ENCODE measurements at regions of chrX and their contacts with region 1.

Region 1: DNA sequence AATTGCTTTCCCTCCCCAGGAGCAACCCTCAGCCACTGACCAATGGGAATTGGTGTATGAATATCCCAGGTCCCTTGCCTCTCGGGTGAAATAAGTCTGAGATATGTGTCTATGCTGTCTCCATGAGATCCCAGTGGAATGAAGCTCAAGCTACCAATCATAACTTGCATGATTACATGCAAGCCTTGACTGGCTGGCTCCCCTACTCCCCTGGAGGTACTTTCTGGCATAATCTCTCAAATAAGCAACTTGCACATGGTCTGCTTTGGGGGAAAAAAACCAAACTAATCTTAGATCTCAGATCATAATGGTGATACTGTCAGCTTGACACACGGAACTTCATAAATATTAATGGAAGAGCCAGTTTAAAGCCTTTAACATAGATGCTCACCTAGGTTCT is 14.0 kb upstream of the PDK3 start:
- DNase-seq: no peak
- ATAC-seq: no peak
- H3K4me3 Mint-ChIP-seq: no peak overlapping the region
- H3K27ac Mint-ChIP-seq: no peak overlapping the region
- H3K4me1 Mint-ChIP-seq: no peaks in the 10 kb centered on the region
- H3K27me3 Mint-ChIP-seq: no peaks in the 10 kb centered on the region
- CTCF ChIP-seq: no peak

Region 2: DNA sequence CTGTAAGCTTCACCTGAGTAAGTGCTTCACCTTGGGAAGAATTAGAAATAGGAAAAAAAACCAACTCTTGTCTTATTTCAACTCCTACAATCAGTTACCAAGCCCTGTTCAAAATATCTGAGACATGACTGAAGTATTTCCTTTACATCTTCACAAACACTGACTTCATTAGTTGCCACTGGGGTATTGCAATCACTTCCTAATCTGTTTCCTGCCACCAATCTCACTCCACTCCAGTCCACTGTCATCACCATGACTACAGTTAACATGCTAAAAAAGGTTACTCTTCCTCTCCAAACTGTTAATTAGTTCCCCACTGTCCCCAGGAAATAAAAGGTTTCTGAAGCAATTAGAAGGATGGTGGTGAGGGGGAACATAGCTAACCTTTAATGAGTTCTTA is 94.0 kb before region 1 on chrX:
- CTCF ChIA-PET with region 1: no interaction called
- POLR2A ChIA-PET with region 1: no interaction called
- intact Hi-C with region 1: no loop called
- DNase-seq: no peak
- ATAC-seq: no peak
- H3K4me3 Mint-ChIP-seq: no peak overlapping the region
- H3K27ac Mint-ChIP-seq: no peak overlapping the region
- H3K4me1 Mint-ChIP-seq: no peaks in the 10 kb centered on the region
- H3K27me3 Mint-ChIP-seq: no peaks in the 10 kb centered on the region
- CTCF ChIP-seq: no peak

Region 3: GRCh38 chrX:24485976-24486680 is 35.0 kb after region 1 on chrX:
- CTCF ChIA-PET with region 1: no interaction called
- POLR2A ChIA-PET with region 1: no interaction called
- intact Hi-C with region 1: loop called (anchors 5 kb)
- DNase-seq: no peak
- ATAC-seq: no peak
- H3K4me3 Mint-ChIP-seq: no peak overlapping the region
- H3K27ac Mint-ChIP-seq: no peak overlapping the region
- H3K4me1 Mint-ChIP-seq: peaks cover 7% of the 10 kb centered on the region
- H3K27me3 Mint-ChIP-seq: no peaks in the 10 kb centered on the region
- CTCF ChIP-seq: no peak

Region 4: GRCh38 chrX:24528605-24529004 is 77.5 kb after region 1 on chrX:
- CTCF ChIA-PET with region 1: no interaction called
- POLR2A ChIA-PET with region 1: no interaction called
- intact Hi-C with region 1: no loop called
- DNase-seq: no peak
- ATAC-seq: no peak
- H3K4me3 Mint-ChIP-seq: no peak overlapping the region
- H3K27ac Mint-ChIP-seq: no peak overlapping the region
- H3K4me1 Mint-ChIP-seq: no peaks in the 10 kb centered on the region
- H3K27me3 Mint-ChIP-seq: no peaks in the 10 kb centered on the region
- CTCF ChIP-seq: no peak